Activated naive CD4-positive, alpha-beta T cell treated with anti-CD3 and anti-CD28 coated beads for 36 hours (primary cell): ENCODE measurements at regions of chr7 and their contacts with region 1.

Region 1: DNA sequence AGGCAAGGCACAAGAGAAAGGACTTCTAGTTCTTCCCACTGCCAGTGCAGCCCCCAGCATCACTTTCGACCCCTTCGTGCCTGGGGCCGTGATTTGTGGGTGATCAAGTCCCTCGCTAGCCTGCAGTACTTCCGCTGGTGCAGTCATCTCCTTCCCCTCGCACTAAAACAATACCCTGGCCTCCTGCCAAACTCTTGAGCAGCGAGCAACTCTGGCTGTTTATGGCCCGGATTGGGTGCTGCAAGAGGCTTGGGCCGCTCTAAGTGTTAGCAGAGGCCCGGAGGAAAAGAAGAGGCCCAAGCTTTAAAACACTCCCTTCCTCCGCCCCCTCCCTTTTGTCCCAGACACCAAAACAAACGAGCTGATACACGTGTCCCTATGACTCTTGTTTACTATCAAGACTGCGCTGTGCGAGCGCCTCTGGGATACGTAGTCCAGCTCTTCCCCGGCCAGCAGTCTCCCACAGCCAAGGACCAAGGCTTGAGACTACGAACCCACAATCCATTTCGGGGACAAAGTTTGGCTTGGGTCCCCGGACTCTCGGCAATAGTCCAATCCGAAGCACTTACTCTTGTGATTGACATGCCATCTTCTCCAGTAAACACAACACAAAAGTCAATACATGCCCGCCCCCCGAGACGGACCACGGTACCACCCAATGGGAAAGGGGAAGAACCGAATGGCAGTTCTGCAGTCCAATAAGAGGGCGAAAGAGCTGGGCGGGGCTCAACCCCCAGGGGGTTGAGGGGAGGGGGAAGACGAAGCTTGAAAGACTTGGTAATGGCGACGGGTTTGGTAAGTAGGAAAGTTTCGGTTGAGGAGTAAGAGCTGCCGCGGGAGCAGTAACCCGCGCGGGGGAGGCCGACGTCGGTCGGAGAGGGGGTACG is at the start of gene HBP1:
- DNase-seq: peak; percentile 99
- H3K4me3 Mint-ChIP-seq: peak within 1 kb of the TSS; percentile 97
- H3K27ac Mint-ChIP-seq: peak within 1 kb of the TSS; percentile 99
- H3K4me1 Mint-ChIP-seq: peaks cover 23% of the 10 kb centered on the region
- H3K27me3 Mint-ChIP-seq: no peaks in the 10 kb centered on the region
- total RNA-seq, gene HBP1: 41.8 to 42.2 TPM

Region 2: GRCh38 chr7:105678811-105679495 is 1489.5 kb before region 1 on chr7:
- CTCF ChIA-PET with region 1: no interaction called
- intact Hi-C with region 1: loop called (anchors 2 kb)
- DNase-seq: peak; percentile 60
- H3K4me3 Mint-ChIP-seq: peak overlapping the region; percentile 82
- H3K27ac Mint-ChIP-seq: peak overlapping the region; percentile 86
- H3K4me1 Mint-ChIP-seq: peaks cover 59% of the 10 kb centered on the region
- H3K27me3 Mint-ChIP-seq: no peaks in the 10 kb centered on the region

Region 3: DNA sequence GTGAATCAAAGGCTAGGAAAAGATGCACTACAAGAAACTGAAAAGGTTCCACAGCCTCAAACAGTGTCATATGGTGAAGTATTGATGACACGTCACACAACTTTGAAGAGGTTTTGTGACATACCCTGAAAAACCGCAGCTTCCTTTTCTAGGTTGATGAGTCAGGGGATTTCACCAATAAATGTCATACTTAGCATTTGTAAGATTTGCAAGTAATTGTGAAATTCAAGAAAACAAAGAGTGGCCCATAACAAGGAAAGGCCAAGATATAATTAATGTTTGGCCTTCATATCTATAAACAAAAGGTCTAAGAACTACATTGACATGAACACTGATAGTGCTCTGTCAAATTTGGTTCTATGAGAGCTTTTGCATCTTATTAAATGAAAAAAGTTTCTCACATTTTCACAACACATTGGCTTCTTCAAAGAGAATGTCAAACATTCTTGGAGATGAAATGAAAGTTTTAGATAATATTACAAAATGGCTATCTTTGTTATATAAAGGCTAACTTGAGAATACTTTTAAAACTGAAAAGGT is 821.7 kb before region 1 on chr7:
- CTCF ChIA-PET with region 1: no interaction called
- intact Hi-C with region 1: loop called (anchors 1 kb)
- DNase-seq: peak; percentile 75
- H3K4me3 Mint-ChIP-seq: peak overlapping the region; percentile 15
- H3K27ac Mint-ChIP-seq: peak overlapping the region; percentile 97
- H3K4me1 Mint-ChIP-seq: peaks cover 55% of the 10 kb centered on the region
- H3K27me3 Mint-ChIP-seq: peaks cover 6% of the 10 kb centered on the region

Region 4: GRCh38 chr7:106659963-106660861 is 508.3 kb before region 1 on chr7:
- CTCF ChIA-PET with region 1: no interaction called
- intact Hi-C with region 1: loop called (anchors 1 kb)
- DNase-seq: peak; percentile 87
- H3K4me3 Mint-ChIP-seq: peak overlapping the region; percentile 87
- H3K27ac Mint-ChIP-seq: peak overlapping the region; percentile 95
- H3K4me1 Mint-ChIP-seq: peaks cover 23% of the 10 kb centered on the region
- H3K27me3 Mint-ChIP-seq: no peaks in the 10 kb centered on the region

Region 5: DNA sequence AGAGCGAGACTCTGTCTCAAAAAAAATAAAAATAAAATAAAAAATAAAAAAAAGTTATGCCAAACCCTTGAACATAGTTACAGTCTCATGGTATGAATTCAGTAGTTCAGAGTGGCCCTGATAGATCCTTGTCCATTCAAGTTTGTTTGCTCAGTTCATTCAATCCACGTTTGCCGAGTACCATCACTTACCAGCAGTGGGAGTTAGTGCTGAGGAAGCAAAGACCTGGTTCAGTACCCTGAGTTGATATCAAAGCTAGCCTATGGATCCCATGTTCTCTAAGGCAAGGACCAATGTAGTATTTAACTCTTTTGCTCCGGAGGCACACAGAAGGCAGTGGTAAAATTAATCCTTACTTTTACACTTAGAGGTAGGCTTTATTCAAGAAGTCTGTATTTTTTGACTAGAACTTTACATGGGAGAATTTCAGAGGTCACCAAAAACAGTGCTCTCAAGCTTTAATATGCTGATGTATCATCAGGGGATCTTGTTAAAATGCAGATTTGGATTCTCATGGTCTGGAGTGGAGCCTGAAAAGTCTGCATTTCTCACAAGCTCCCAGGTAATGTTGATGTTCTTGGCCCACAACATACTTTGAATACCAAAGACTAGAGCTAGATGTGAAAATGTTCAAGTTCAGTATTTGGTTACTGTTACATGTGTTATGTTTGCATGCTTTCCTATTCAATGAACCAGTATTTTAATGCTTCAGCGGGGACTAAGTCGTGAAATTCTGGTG is 37.8 kb before region 1 on chr7:
- CTCF ChIA-PET with region 1: no interaction called
- intact Hi-C with region 1: loop called (anchors 2 kb)
- DNase-seq: no peak
- H3K4me3 Mint-ChIP-seq: no peak overlapping the region
- H3K27ac Mint-ChIP-seq: no peak overlapping the region
- H3K4me1 Mint-ChIP-seq: peaks cover 10% of the 10 kb centered on the region
- H3K27me3 Mint-ChIP-seq: no peaks in the 10 kb centered on the region

Region 6: GRCh38 chr7:107207459-107207858 is 39.0 kb after region 1 on chr7:
- CTCF ChIA-PET with region 1: no interaction called
- intact Hi-C with region 1: no loop called
- DNase-seq: no peak
- H3K4me3 Mint-ChIP-seq: no peak overlapping the region
- H3K27ac Mint-ChIP-seq: peak overlapping the region; percentile 38
- H3K4me1 Mint-ChIP-seq: no peaks in the 10 kb centered on the region
- H3K27me3 Mint-ChIP-seq: no peaks in the 10 kb centered on the region

Region 7: GRCh38 chr7:107563775-107564552 is 395.5 kb after region 1 on chr7 and contains the starts of genes COG5 and DUS4L:
- CTCF ChIA-PET with region 1: no interaction called
- intact Hi-C with region 1: loop called (anchors 1 kb)
- DNase-seq: peak; percentile 87
- H3K4me3 Mint-ChIP-seq: peak within 1 kb of the TSS; percentile 82
- H3K27ac Mint-ChIP-seq: peak within 1 kb of the TSS; percentile 92
- H3K4me1 Mint-ChIP-seq: peaks cover 61% of the 10 kb centered on the region
- H3K27me3 Mint-ChIP-seq: no peaks in the 10 kb centered on the region
- total RNA-seq, gene COG5: 52.0 to 62.8 TPM
- total RNA-seq, gene DUS4L: 10.8 to 12.3 TPM

Region 8: GRCh38 chr7:107816011-107816566 is 647.6 kb after region 1 on chr7:
- CTCF ChIA-PET with region 1: no interaction called
- intact Hi-C with region 1: loop called (anchors 10 kb)
- DNase-seq: no peak
- H3K4me3 Mint-ChIP-seq: no peak overlapping the region
- H3K27ac Mint-ChIP-seq: peak overlapping the region; percentile 1
- H3K4me1 Mint-ChIP-seq: peaks cover 32% of the 10 kb centered on the region
- H3K27me3 Mint-ChIP-seq: peaks cover 2% of the 10 kb centered on the region